H1 (cell line): ENCODE measurements at regions of chr14 and their contacts with region 1.

Region 1: DNA sequence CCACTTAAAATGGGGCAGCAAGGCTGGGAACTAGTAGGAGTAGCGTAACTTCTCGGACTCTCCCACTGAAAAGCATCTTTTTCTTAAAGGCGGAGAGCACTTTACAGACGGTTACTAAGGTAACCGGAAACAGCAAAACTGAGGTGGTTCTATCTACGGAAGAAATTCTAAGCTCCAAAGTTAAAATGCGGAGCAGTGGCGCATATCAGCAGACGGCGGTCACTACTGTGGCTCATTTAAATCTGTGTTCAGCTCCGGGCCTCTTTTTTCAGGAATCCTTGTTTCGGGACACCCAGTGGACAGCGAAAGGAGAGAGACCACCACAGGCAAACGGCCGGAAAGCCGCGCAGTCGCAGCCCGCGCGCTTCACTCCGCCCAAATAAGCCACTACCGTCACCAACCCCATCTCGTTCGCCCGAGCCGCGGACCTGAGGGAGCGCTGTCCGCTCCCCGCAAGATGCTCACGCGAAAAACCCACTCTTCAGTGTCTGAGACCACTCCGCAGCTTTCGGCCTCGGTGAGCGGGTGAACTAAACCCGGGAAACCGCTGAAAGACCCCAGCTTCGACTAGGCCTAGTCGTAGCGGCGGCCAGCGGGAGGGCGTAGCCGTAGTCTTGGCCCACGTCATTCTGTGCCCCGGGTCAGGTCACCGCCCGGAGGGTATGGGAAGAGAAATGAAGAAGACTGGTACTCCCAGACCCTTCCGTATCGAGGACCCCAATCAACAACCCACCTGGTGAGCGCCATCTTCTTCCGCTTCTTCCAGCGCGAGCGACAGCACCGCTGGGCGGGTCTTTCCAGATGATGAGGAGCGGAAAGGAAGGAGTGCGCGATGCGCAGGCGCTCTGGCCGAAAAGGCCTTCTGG is at the start of gene SNW1:
- DNase-seq: peak; percentile 83 to 88
- H3K4me3 ChIP-seq: peak within 1 kb of the TSS; percentile 87 to 100 (median 100)
- H3K27ac ChIP-seq: peak within 1 kb of the TSS; percentile 93
- H3K4me1 ChIP-seq: peaks cover 1 to 13% (median 7%) of the 10 kb centered on the region in 4 experiments; a peak in 4 of 7 replicates
- H3K27me3 ChIP-seq: no peaks in the 10 kb centered on the region
- CTCF ChIP-seq: no peak
- EP300 ChIP-seq: no peak
- POLR2A ChIP-seq: peak; percentile 59 to 79
- RAD21 ChIP-seq: no peak
- total RNA-seq, gene SNW1: 79.2 and 88.8 TPM in 2 replicates

Region 2: DNA sequence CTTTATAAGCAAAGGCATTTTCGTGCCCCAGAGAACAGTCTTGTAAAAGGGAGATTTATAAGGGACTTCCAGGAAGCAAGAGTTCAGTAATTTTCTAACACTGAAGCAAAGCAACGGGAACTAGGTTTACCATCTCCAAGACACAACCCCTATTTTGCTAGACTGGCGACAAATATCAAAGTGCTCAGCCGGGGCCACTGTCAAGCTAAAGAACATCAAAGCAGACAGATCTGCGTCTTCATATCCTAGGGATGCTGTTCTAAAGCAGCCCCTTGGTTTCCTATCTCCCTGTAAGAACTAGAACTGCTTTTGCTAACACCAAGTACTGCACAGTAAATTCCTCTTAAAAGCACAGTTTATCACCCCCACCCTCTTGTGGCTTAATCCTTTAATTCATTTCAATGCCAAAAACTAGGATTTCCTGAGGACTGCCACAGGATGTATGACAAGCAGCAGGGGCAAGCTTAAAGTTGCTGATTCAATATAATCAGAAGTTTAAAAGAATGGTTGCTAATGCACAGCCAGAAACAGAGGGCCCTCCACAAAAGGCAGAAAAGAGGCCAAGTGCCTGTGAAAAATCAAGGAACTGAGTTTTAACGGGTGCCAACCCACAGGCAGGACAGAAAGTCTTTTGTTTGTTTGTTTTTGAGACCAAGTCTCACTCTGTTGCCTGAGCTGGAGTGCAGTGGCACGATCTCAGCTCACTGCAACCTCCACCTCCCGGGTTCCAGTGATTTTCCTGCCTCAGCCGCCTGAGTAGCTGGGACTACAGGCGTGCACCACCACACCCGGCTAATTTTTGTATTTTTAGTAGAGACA is 218.0 kb before region 1 on chr14:
- CTCF ChIA-PET with region 1: no interaction called
- POLR2A ChIA-PET with region 1: no interaction called
- DNase-seq: no peak
- H3K4me3 ChIP-seq: no peak overlapping the region
- H3K27ac ChIP-seq: no peak overlapping the region
- H3K4me1 ChIP-seq: no peaks in the 10 kb centered on the region
- H3K27me3 ChIP-seq: no peaks in the 10 kb centered on the region
- CTCF ChIP-seq: no peak
- EP300 ChIP-seq: no peak
- POLR2A ChIP-seq: no peak
- RAD21 ChIP-seq: no peak

Region 3: GRCh38 chr14:77790566-77791224 is 30.1 kb after region 1 on chr14:
- CTCF ChIA-PET with region 1: interaction called, 16 read pairs
- POLR2A ChIA-PET with region 1: interaction called, 5 read pairs
- DNase-seq: no peak
- H3K4me3 ChIP-seq: no peak overlapping the region
- H3K27ac ChIP-seq: no peak overlapping the region; the same call in 1 of the 2 replicates
- H3K4me1 ChIP-seq: peaks cover 0 to 9% (median 3%) of the 10 kb centered on the region in 4 experiments; a peak in 3 of 7 replicates
- H3K27me3 ChIP-seq: no peaks in the 10 kb centered on the region
- CTCF ChIP-seq: no peak
- EP300 ChIP-seq: no peak
- POLR2A ChIP-seq: no peak
- RAD21 ChIP-seq: no peak

Region 4: DNA sequence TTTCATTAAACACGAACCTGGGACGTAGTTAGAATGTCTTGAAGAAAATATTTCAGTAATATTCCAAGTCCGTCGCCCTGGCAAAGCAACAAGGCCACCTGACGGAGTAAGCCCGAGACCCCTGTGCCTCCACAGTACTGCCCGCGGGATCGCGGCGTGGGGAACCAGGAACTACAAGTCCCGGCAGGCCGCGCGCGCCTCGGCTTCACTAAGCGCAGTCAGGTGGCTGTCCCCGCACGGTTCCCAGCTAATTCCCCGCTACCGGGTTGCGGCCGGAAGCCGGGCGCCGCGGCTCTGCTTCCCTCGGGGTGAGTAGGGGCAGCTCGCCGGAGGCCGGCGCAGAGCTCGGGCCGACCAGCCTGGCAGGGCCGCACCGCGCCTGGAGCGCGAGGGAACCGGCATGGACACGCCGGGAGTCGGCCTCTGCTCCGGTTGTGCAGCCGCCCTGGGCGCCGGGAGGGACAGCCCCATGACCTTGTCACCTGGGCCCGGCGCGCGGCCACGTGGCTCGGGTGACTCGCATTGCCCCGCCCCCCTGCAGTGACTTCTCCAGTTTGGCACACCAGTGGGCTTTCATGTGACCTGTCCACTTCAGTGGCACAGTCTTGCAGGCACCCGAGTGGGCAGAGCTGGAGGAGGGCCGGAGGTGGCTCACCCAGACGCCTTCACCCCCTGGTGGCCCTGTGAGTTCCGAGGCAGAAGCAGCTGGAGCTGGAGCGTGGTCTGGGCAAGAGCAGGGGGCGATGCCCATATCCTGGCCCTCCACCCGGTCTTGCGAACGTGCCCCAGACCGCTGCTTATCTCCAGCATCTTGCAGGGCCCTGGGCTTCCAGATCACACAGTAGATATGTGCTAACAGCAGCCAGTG is 39.5 kb after region 1 on chr14 and contains the start of gene ADCK1:
- CTCF ChIA-PET with region 1: interaction called, 27 read pairs
- POLR2A ChIA-PET with region 1: interaction called, 9 read pairs
- DNase-seq: peak in 1 of 2 experiments; percentile 88
- H3K4me3 ChIP-seq: peak within 1 kb of the TSS; percentile 74 to 86 (median 84)
- H3K27ac ChIP-seq: peak within 1 kb of the TSS; percentile 41; the same call in 1 of the 2 replicates
- H3K4me1 ChIP-seq: peaks cover 0 to 13% (median 1%) of the 10 kb centered on the region in 4 experiments; a peak in 4 of 7 replicates
- H3K27me3 ChIP-seq: no peaks in the 10 kb centered on the region
- CTCF ChIP-seq: peak in 2 of 3 experiments; percentile 26 to 40; a peak in 2 of 4 replicates
- EP300 ChIP-seq: no peak
- POLR2A ChIP-seq: peak in 1 of 2 experiments; percentile 88; a peak in 2 of 3 replicates
- RAD21 ChIP-seq: no peak; a peak in 1 of 4 replicates
- total RNA-seq, gene ADCK1: 11.0 and 11.5 TPM in 2 replicates

Region 5: GRCh38 chr14:77882098-77882497 is 121.5 kb after region 1 on chr14:
- CTCF ChIA-PET with region 1: no interaction called
- POLR2A ChIA-PET with region 1: no interaction called
- DNase-seq: no peak
- H3K4me3 ChIP-seq: no peak overlapping the region
- H3K27ac ChIP-seq: no peak overlapping the region
- H3K4me1 ChIP-seq: no peaks in the 10 kb centered on the region
- H3K27me3 ChIP-seq: no peaks in the 10 kb centered on the region
- CTCF ChIP-seq: no peak
- EP300 ChIP-seq: no peak
- POLR2A ChIP-seq: no peak
- RAD21 ChIP-seq: no peak

Region 6: DNA sequence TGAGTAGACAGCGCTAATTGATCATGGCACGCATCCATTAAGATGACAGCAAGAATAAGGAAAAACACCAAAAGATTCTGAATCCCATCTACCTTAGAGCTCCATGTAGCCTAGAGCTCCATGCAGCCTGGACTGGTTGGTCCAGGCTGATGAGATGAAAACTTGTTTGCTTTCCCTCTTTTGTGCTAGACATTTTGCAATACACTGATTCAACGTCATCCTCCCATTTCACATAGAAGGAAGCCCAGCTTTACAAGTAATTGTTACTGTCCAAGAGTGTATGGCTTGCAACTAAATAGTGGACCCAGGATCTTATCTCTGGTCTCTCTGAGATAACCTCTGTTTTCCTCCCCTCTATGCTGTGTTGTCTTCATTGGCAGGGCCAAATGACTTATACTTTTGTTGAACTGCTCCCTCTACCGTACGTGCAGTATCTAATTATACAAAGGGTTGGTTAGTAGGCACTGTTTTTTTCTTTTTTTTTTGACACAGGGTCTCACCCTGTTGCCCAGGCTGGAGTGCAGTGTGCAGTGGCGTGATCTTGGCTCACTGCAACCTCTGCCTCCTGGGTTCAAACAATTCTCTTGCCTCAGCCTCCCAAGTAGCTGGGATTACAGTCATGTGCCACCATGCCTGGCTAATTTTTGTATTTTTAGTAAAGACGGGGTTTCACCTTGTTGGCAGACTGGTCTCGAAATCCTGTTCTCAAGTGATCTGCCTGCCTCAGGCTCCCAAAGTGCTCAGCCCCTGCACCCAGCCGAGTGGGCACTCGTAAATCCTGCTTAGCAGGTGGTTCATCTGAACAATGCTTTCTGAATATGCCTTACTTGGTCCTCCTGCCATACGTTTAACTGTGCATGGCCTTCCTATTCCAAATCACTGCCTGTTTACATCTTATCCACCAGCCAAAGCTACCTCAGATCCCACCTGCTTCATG is 201.3 kb after region 1 on chr14:
- CTCF ChIA-PET with region 1: no interaction called
- POLR2A ChIA-PET with region 1: no interaction called
- DNase-seq: no peak
- H3K4me3 ChIP-seq: no peak overlapping the region
- H3K27ac ChIP-seq: no peak overlapping the region
- H3K4me1 ChIP-seq: peaks cover 0 to 3% (median 1%) of the 10 kb centered on the region in 4 experiments; a peak in 2 of 7 replicates
- H3K27me3 ChIP-seq: peaks cover 0 to 9% (median 6%) of the 10 kb centered on the region in 4 experiments; a peak in 3 of 7 replicates
- CTCF ChIP-seq: no peak
- EP300 ChIP-seq: no peak
- POLR2A ChIP-seq: no peak
- RAD21 ChIP-seq: no peak

Region 7: GRCh38 chr14:78202163-78202562 is 441.5 kb after region 1 on chr14:
- CTCF ChIA-PET with region 1: no interaction called
- POLR2A ChIA-PET with region 1: no interaction called
- DNase-seq: no peak
- H3K4me3 ChIP-seq: no peak overlapping the region
- H3K27ac ChIP-seq: no peak overlapping the region
- H3K4me1 ChIP-seq: peaks cover 0 to 5% (median 1%) of the 10 kb centered on the region in 4 experiments; a peak in 1 of 7 replicates
- H3K27me3 ChIP-seq: no peaks in the 10 kb centered on the region
- CTCF ChIP-seq: no peak
- EP300 ChIP-seq: no peak
- POLR2A ChIP-seq: no peak
- RAD21 ChIP-seq: no peak